ENCODE measurements at regions of chr11 and their contacts with region 1.

Region 1: DNA sequence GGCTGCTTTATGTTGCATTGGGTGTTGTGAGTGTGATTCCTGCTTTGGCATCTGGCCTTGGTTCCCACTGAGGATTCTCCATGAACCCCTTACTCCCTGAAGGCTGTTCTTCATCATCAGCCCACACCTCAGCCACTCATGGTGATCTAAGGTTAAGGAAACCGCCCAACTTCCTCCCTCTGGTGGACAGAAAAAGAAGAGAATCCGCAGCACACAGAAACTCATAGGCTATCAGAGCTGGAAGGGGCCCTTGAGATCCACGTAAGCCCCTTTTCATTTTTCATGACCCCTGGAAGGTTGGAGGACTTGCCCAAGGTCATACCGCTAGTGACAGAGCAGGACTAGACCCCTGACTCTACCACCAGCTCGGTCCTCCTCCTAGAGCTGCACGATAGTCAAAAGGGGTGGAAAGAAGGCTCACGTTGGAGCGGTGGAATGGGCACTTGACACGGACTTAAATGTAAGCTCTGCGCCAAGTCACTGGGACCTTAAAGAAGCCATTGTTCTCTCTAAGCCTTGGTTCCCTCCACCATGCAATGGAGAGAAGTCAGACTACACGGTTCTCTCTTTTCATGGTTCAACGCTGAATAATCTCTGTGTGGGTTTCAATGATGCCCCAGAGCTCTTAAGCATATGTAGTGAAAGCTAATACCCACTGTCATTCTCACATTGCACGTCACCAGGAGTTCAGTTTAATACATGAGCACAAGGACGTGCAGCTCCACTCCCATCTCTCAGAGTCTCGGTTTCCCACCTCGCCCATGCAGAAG is 83.6 kb upstream of the CRTAM start:
- DNase-seq: peak in 3 of 5 donors; percentile 28 to 54 (median 46)
- H3K4me3 ChIP-seq: no peak overlapping the region
- H3K4me3 Mint-ChIP-seq: no peak overlapping the region
- H3K27ac ChIP-seq: no peak overlapping the region
- H3K27ac Mint-ChIP-seq: peak overlapping the region in 4 of 8 donors; percentile 19 to 66 (median 50)
- H3K4me1 ChIP-seq: peaks cover 38% of the 10 kb centered on the region
- H3K4me1 Mint-ChIP-seq: peaks cover 42 to 60% (median 45%) of the 10 kb centered on the region in 3 donors
- H3K27me3 ChIP-seq: no peaks in the 10 kb centered on the region
- H3K27me3 Mint-ChIP-seq: no peaks in the 10 kb centered on the region

Region 2: GRCh38 chr11:122578168-122578825 is 176.4 kb before region 1 on chr11:
- CTCF ChIA-PET with region 1: interaction called, 22 read pairs
- POLR2A ChIA-PET with region 1: no interaction called
- DNase-seq: no peak
- H3K4me3 ChIP-seq: no peak overlapping the region
- H3K4me3 Mint-ChIP-seq: no peak overlapping the region
- H3K27ac ChIP-seq: no peak overlapping the region
- H3K27ac Mint-ChIP-seq: no peak overlapping the region
- H3K4me1 ChIP-seq: peaks cover 7% of the 10 kb centered on the region
- H3K4me1 Mint-ChIP-seq: peaks cover 9 to 14% (median 13%) of the 10 kb centered on the region in 3 donors
- H3K27me3 ChIP-seq: no peaks in the 10 kb centered on the region
- H3K27me3 Mint-ChIP-seq: peaks cover 2 to 4% of the 10 kb centered on the region in 2 donors

Region 3: GRCh38 chr11:122655527-122656072 is 99.1 kb before region 1 on chr11 and contains the start of gene UBASH3B:
- CTCF ChIA-PET with region 1: interaction called, 53 read pairs
- POLR2A ChIA-PET with region 1: interaction called, 8 read pairs
- DNase-seq: peak; percentile 39 to 74 (median 60)
- H3K4me3 ChIP-seq: peak within 1 kb of the TSS; percentile 82
- H3K4me3 Mint-ChIP-seq: peak within 1 kb of the TSS; percentile 94 to 99 (median 98)
- H3K27ac ChIP-seq: peak within 1 kb of the TSS; percentile 54
- H3K27ac Mint-ChIP-seq: peak within 1 kb of the TSS; percentile 87 to 95 (median 92)
- H3K4me1 ChIP-seq: peaks cover 41% of the 10 kb centered on the region
- H3K4me1 Mint-ChIP-seq: peaks cover 44 to 52% (median 47%) of the 10 kb centered on the region in 3 donors
- H3K27me3 ChIP-seq: no peaks in the 10 kb centered on the region
- H3K27me3 Mint-ChIP-seq: peaks cover 0 to 5% of the 10 kb centered on the region in 2 donors
- total RNA-seq, gene UBASH3B: 34.6 to 36.4 TPM

Region 4: DNA sequence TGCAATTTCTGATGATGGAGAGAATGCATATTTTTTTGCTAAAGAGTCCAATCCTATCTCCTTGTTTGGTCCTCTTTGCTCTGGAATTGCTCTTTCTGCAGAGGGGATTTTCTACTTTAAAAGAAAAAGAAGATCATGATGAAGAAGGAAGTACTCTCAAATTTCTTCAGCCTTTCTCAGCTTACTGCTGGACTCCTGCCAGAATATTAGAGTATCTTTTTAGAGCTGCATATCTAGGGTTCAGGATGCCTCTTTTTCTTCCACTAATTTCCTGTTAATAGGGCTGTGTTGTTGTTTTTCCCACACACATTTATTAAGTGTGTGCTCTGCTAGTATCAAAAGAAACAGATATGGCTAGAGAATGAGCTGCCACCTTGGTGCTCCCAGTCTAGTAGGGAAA is 81.0 kb before region 1 on chr11:
- CTCF ChIA-PET with region 1: interaction called, 17 read pairs
- POLR2A ChIA-PET with region 1: interaction called, 3 read pairs
- DNase-seq: no peak
- H3K4me3 ChIP-seq: no peak overlapping the region
- H3K4me3 Mint-ChIP-seq: no peak overlapping the region
- H3K27ac ChIP-seq: no peak overlapping the region
- H3K27ac Mint-ChIP-seq: peak overlapping the region in 3 of 8 donors; percentile 8 to 42 (median 34)
- H3K4me1 ChIP-seq: peaks cover 71% of the 10 kb centered on the region
- H3K4me1 Mint-ChIP-seq: peaks cover 67 to 84% (median 76%) of the 10 kb centered on the region in 3 donors
- H3K27me3 ChIP-seq: no peaks in the 10 kb centered on the region
- H3K27me3 Mint-ChIP-seq: no peaks in the 10 kb centered on the region

Region 5: DNA sequence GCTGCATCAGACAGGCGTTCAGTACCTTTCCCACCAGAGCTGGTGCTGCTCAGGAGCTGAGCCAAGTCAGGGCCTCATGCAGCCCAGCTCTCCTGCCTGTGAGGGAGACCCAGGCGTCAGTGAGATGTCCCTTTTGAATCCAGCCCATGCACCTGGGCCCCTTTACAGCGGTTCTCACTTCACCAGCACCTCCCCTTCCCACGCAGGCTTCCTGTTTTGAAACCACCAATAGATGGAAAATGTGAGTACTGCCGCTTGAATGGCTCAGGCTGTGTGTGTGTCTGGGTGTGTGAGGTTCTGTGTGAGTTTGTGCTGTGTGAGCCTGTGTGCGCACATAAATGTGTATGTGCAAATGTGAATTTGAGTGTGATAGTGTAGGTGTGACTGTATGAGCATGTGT is 10.8 kb before region 1 on chr11:
- CTCF ChIA-PET with region 1: interaction called, 59 read pairs
- POLR2A ChIA-PET with region 1: interaction called, 7 read pairs
- DNase-seq: peak; percentile 50 to 88 (median 74)
- H3K4me3 ChIP-seq: peak overlapping the region; percentile 36
- H3K4me3 Mint-ChIP-seq: no peak overlapping the region
- H3K27ac ChIP-seq: peak overlapping the region; percentile 26
- H3K27ac Mint-ChIP-seq: no peak overlapping the region
- H3K4me1 ChIP-seq: peaks cover 70% of the 10 kb centered on the region
- H3K4me1 Mint-ChIP-seq: peaks cover 9 to 24% (median 21%) of the 10 kb centered on the region in 3 donors
- H3K27me3 ChIP-seq: no peaks in the 10 kb centered on the region
- H3K27me3 Mint-ChIP-seq: no peaks in the 10 kb centered on the region

Region 6: GRCh38 chr11:122781378-122782195 is 26.8 kb after region 1 on chr11:
- CTCF ChIA-PET with region 1: interaction called, 31 read pairs
- POLR2A ChIA-PET with region 1: interaction called, 3 read pairs
- DNase-seq: peak; percentile 51 to 78 (median 56)
- H3K4me3 ChIP-seq: no peak overlapping the region
- H3K4me3 Mint-ChIP-seq: no peak overlapping the region
- H3K27ac ChIP-seq: no peak overlapping the region
- H3K27ac Mint-ChIP-seq: peak overlapping the region in 2 of 8 donors; percentile 29 to 60
- H3K4me1 ChIP-seq: no peaks in the 10 kb centered on the region
- H3K4me1 Mint-ChIP-seq: peaks cover 5 to 7% (median 6%) of the 10 kb centered on the region in 3 donors
- H3K27me3 ChIP-seq: no peaks in the 10 kb centered on the region
- H3K27me3 Mint-ChIP-seq: peaks cover 0 to 3% of the 10 kb centered on the region in 2 donors